ENCODE measurements at regions of chrX and their contacts with region 1.

Region 1: GRCh38 chrX:15854712-15855567 is at the start of gene AP1S2:
- DNase-seq: peak; percentile 92 to 95
- H3K4me3 ChIP-seq: peak within 1 kb of the TSS; percentile 67
- H3K4me3 Mint-ChIP-seq: peak within 1 kb of the TSS; percentile 89
- H3K27ac Mint-ChIP-seq: peak within 1 kb of the TSS; percentile 82
- H3K4me1 ChIP-seq: no peaks in the 10 kb centered on the region
- H3K4me1 Mint-ChIP-seq: no peaks in the 10 kb centered on the region
- H3K27me3 ChIP-seq: no peaks in the 10 kb centered on the region
- H3K27me3 Mint-ChIP-seq: peaks cover 2% of the 10 kb centered on the region
- CTCF ChIP-seq: no peak
- total RNA-seq, gene AP1S2: 18.4 and 18.6 TPM in 2 replicates

Region 2: GRCh38 chrX:15680401-15680800 is 174.5 kb before region 1 on chrX:
- CTCF ChIA-PET with region 1: no interaction called
- POLR2A ChIA-PET with region 1: no interaction called
- intact Hi-C with region 1: no loop called
- DNase-seq: no peak
- H3K4me3 ChIP-seq: no peak overlapping the region
- H3K4me3 Mint-ChIP-seq: no peak overlapping the region
- H3K27ac Mint-ChIP-seq: no peak overlapping the region
- H3K4me1 ChIP-seq: no peaks in the 10 kb centered on the region
- H3K4me1 Mint-ChIP-seq: no peaks in the 10 kb centered on the region
- H3K27me3 ChIP-seq: no peaks in the 10 kb centered on the region
- H3K27me3 Mint-ChIP-seq: no peaks in the 10 kb centered on the region
- CTCF ChIP-seq: no peak

Region 3: GRCh38 chrX:15834827-15835595 is 19.9 kb before region 1 on chrX:
- CTCF ChIA-PET with region 1: interaction called, 4 read pairs
- POLR2A ChIA-PET with region 1: no interaction called
- intact Hi-C with region 1: loop called (anchors 1 kb)
- DNase-seq: peak in 1 of 2 experiments; percentile 24
- H3K4me3 ChIP-seq: no peak overlapping the region
- H3K4me3 Mint-ChIP-seq: peak overlapping the region; percentile 48
- H3K27ac Mint-ChIP-seq: peak overlapping the region; percentile 53
- H3K4me1 ChIP-seq: peaks cover 12% of the 10 kb centered on the region; the same call in 1 of the 2 replicates
- H3K4me1 Mint-ChIP-seq: no peaks in the 10 kb centered on the region
- H3K27me3 ChIP-seq: no peaks in the 10 kb centered on the region
- H3K27me3 Mint-ChIP-seq: no peaks in the 10 kb centered on the region
- CTCF ChIP-seq: no peak

Region 4: GRCh38 chrX:16719334-16720084 is 864.6 kb after region 1 on chrX and contains the start of gene SYAP1:
- CTCF ChIA-PET with region 1: no interaction called
- POLR2A ChIA-PET with region 1: no interaction called
- intact Hi-C with region 1: loop called (anchors 10 kb)
- DNase-seq: peak; percentile 94
- H3K4me3 ChIP-seq: peak within 1 kb of the TSS; percentile 65
- H3K4me3 Mint-ChIP-seq: peak within 1 kb of the TSS; percentile 85
- H3K27ac Mint-ChIP-seq: peak within 1 kb of the TSS; percentile 97
- H3K4me1 ChIP-seq: peaks cover under 1% of the 10 kb centered on the region; the same call in 1 of the 2 replicates
- H3K4me1 Mint-ChIP-seq: peaks cover 12% of the 10 kb centered on the region
- H3K27me3 ChIP-seq: no peaks in the 10 kb centered on the region
- H3K27me3 Mint-ChIP-seq: no peaks in the 10 kb centered on the region
- CTCF ChIP-seq: no peak
- total RNA-seq, gene SYAP1: 32.8 and 35.7 TPM in 2 replicates

Measured in Caco-2 (cell line).